Activated CD4-positive, alpha-beta memory T cell treated with anti-CD3 and anti-CD28 coated beads for 36 hours (primary cell): ENCODE measurements at regions of chr3 and their contacts with region 1.

Region 1: DNA sequence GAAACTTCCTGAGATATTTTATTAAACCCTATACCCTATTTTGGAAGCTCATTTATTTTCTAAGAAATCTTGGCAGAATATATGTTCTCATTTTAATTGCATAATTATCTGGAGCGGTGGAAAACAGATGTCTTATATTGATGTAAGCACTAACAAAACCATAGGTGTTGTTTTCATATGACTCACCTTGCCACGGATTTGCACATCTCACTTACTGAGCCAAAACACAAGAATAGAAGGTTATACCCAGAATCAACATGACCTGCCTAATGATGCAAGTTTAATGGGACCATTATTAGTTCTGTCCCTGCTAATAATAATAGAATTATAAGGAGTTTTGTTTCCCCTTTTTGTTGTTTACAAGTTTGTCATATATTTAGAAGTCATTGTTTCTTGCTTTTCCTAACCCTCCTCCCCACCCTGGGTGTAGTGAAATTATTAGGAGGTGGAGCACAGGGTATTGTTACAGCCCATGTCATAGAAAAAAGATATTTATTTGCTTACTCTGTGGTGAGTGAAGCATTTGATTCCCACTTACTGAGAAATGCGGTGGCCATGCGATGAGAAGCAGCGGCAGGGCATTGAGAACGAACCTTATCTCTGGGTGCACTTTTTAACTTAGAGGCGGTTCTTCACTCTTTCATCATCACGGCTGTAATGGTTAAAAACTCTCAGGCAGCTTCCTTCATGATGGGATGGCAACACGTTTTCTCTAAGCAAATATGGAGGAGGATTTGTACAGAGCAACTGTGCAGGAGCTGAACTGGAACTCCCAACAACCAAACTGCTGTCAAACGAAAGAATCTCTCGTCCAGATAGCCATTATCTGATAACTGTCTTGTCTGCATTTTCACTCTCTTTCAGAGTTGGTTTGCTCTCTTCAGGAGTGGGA is 521 bp downstream of the IL5RA start:
- DNase-seq: no peak
- H3K4me3 Mint-ChIP-seq: no peak overlapping the region
- H3K27ac Mint-ChIP-seq: peak overlapping the region; percentile 73
- H3K4me1 Mint-ChIP-seq: peaks cover 33% of the 10 kb centered on the region
- H3K27me3 Mint-ChIP-seq: peaks cover 4% of the 10 kb centered on the region

Region 2: DNA sequence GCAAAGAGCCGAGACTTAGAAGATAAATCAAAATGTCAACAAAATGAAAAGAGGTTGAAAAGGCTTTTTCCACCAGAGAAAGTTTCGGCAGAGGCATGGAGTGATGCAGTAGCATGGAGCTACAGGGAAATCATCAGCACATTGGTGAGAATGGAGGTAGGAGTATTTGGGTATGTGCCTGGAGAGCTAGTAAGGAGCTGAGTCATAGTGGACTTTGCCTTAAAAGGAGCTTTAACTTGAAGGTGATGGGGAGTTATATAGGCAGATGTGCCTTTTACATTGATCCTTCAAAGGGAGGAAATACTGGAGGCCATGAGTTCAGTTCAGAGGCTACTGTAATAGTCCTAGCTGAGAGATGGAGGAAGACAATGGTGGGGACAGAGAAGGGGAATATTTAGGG is 43.8 kb before region 1 on chr3:
- CTCF ChIA-PET with region 1: no interaction called
- POLR2A ChIA-PET with region 1: no interaction called
- intact Hi-C with region 1: no loop called
- DNase-seq: no peak
- H3K4me3 Mint-ChIP-seq: no peak overlapping the region
- H3K27ac Mint-ChIP-seq: no peak overlapping the region
- H3K4me1 Mint-ChIP-seq: no peaks in the 10 kb centered on the region
- H3K27me3 Mint-ChIP-seq: no peaks in the 10 kb centered on the region

Region 3: DNA sequence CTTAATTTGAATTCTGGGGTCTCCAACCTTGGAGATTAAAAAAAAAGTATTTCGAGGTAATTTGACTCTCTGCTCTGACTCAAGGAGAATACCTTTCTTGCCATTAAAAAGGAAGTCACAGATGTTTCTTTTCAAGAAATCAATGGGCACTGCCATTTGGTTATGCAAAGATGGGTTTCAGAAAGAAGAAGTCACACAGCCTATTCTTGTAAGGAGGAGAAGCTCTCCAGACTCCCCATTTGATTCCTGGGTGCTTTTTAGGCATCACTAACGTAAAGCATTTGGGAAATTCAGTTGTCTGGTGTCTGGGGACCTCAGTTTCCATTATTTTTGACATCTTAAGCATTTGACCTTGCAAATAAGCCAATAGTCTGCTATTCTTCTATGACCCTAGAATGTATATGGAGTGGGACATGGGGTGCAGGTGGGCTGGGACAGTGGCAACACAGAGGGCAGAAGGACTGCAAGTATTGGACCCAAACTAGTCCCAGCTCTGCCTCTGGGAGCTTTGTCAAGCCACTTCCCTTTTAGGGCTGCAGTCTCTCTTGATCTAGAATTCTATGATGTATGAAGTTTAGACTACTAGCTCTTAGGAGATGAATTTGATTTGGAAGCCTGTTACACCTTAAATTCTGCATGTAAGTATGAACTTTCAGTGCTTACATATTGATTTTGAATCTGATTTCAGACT is 27.3 kb before region 1 on chr3:
- CTCF ChIA-PET with region 1: no interaction called
- POLR2A ChIA-PET with region 1: no interaction called
- intact Hi-C with region 1: no loop called
- DNase-seq: no peak
- H3K4me3 Mint-ChIP-seq: no peak overlapping the region
- H3K27ac Mint-ChIP-seq: no peak overlapping the region
- H3K4me1 Mint-ChIP-seq: no peaks in the 10 kb centered on the region
- H3K27me3 Mint-ChIP-seq: no peaks in the 10 kb centered on the region

Region 4: GRCh38 chr3:3165241-3165640 is 55.6 kb after region 1 on chr3:
- CTCF ChIA-PET with region 1: no interaction called
- POLR2A ChIA-PET with region 1: no interaction called
- intact Hi-C with region 1: loop called (anchors 1 kb)
- DNase-seq: peak; percentile 57
- H3K4me3 Mint-ChIP-seq: no peak overlapping the region
- H3K27ac Mint-ChIP-seq: peak overlapping the region; percentile 86
- H3K4me1 Mint-ChIP-seq: peaks cover 62% of the 10 kb centered on the region
- H3K27me3 Mint-ChIP-seq: no peaks in the 10 kb centered on the region